Calu3 (cell line): ENCODE measurements at regions of chrX and their contacts with region 1.

Region 1: DNA sequence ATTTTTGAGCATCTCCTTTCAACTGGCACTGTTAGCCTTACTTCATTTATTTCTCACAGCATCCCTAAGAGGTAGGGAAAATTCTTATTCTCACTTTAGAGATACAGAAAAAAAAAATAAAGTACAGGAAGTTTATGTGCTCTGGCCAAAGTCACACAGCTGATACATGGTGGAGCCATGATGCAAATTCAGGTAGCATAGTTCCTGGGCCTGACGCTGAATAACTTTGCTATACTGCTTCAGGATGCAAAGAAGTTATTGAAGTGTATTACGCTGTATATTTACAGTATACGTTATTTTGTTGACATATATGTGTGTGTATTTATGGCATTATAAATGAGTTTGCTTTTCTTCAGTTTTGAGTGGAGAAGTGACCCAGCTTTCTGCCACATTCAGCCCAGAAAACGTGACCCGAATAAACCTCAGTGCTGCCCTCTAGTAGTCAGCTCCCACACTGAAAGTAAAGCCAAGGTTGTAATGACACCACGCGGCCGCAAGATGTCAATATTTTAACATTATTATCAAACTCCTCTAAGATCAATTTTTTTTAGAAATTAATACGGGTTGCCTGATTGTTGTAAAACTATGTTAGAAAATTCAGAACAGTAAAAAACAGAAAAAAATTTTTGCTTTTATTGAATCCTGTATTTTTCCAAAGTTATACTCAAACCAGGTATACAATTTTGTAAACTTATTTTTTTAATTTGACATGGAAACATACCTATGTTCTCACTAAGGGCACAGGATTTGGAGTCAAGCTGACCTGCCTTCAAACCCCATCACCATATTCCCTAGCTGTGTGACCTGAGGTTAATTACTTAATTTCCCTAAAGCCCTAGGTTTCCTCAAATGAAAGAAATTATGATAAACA is 3.8 kb upstream of the GUCY2F start:
- DNase-seq: peak; percentile 50
- H3K4me3 Mint-ChIP-seq: no peak overlapping the region
- H3K27ac Mint-ChIP-seq: no peak overlapping the region
- H3K4me1 Mint-ChIP-seq: no peaks in the 10 kb centered on the region
- H3K27me3 Mint-ChIP-seq: peaks cover 26% of the 10 kb centered on the region
- CTCF ChIP-seq: peak; percentile 81

Region 2: DNA sequence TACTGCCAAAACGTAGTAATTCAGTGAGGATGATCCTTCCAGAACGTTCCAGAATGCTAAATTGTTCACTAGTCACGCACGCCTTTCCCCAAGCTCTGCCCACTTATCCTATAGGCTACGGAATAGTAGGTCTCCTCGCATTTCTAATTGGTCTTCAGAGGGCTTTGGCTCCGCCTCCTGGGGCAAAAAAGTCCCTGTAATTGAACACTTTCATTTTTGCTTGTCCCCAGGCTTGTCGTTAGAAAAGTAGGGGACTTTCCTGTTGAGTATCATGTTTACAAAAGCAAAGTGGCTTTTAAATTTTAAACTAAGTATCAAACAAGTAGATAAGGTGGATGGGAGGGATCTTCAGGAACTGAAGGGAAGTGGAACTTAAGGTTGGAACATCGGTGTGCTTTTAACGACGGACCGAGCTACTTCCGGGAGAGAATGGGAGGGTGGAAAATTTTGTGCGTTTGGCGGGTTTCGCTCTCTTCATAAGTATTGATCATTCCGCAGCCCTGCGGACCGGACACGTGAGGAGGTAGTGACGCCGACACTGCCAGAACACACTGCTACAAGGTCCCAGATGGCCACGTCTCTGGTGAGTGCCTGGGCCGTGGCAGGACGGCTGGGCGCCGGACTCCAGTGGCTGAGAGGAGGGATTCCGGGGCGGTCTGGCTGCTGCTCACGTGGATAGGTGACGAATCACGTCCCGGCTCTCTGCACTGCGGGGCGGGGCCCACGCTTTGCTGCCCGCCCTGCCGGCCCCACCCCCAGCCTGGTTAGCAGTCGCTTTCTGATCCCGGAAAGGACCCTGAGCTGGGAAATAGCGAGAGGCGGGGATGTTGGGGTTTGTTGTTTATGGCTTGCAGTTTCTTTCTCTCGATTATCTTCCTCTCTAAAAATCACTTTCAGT is 51.0 kb after region 1 on chrX and contains the start of gene NXT2:
- CTCF ChIA-PET with region 1: interaction called, 4 read pairs
- intact Hi-C with region 1: loop called (anchors 2 kb)
- DNase-seq: peak; percentile 92
- H3K4me3 Mint-ChIP-seq: peak within 1 kb of the TSS; percentile 80
- H3K27ac Mint-ChIP-seq: peak within 1 kb of the TSS; percentile 98
- H3K4me1 Mint-ChIP-seq: peaks cover 17% of the 10 kb centered on the region
- H3K27me3 Mint-ChIP-seq: no peaks in the 10 kb centered on the region
- CTCF ChIP-seq: no peak
- total RNA-seq, gene NXT2: 13.1 and 14.6 TPM in 2 replicates

Region 3: GRCh38 chrX:109635176-109635575 is 149.5 kb after region 1 on chrX:
- CTCF ChIA-PET with region 1: interaction called, 9 read pairs
- intact Hi-C with region 1: loop called (anchors 1 kb)
- DNase-seq: peak; percentile 5
- H3K4me3 Mint-ChIP-seq: no peak overlapping the region
- H3K27ac Mint-ChIP-seq: no peak overlapping the region
- H3K4me1 Mint-ChIP-seq: no peaks in the 10 kb centered on the region
- H3K27me3 Mint-ChIP-seq: no peaks in the 10 kb centered on the region
- CTCF ChIP-seq: peak; percentile 52

Region 4: DNA sequence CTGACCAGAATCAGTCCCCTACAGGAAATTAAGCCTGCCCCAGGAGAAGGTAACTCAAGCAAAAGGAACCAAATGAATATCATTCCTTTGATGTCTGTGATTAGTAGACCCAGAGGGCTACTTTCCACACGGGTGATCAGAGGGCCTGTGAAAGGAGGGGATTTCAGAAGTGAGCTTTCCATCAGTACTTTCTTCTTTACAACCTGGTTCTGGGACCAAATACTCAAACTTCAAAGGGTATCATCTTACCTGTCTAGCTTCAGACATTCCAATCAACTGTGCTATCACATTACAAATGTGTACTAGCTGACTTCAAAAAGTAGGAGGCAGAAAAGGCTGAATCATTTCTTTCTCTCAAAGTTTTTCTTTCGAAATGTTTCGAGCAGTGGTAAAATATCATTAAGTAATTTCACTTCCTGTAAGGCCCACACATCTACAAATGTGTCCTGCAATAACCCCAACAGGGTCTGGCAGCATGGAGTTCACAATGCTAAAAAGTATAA is 223.5 kb after region 1 on chrX:
- CTCF ChIA-PET with region 1: no interaction called
- intact Hi-C with region 1: loop called (anchors 5 kb)
- DNase-seq: no peak
- H3K4me3 Mint-ChIP-seq: no peak overlapping the region
- H3K27ac Mint-ChIP-seq: no peak overlapping the region
- H3K4me1 Mint-ChIP-seq: peaks cover 8% of the 10 kb centered on the region
- H3K27me3 Mint-ChIP-seq: no peaks in the 10 kb centered on the region
- CTCF ChIP-seq: no peak

Region 5: DNA sequence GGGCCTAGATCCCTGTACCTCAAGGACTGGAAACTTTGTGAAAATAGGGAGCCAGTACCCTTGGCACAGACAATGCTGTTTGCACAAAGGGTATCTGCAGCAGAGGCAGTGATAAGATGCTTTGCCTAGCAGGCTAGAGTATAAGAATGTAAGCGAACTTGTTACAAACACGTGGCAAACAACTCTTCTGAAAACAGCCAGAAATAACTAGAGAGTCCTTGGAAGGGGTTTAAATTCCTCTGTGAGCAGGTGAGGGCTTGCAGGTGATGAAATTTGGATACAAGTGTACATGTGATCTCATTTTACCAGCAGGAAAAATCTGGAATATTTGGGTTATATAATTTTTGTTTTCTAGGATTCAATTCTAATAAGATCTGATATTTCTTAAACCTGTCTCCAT is 266.0 kb after region 1 on chrX:
- CTCF ChIA-PET with region 1: no interaction called
- intact Hi-C with region 1: no loop called
- DNase-seq: no peak
- H3K4me3 Mint-ChIP-seq: no peak overlapping the region
- H3K27ac Mint-ChIP-seq: no peak overlapping the region
- H3K4me1 Mint-ChIP-seq: no peaks in the 10 kb centered on the region
- H3K27me3 Mint-ChIP-seq: no peaks in the 10 kb centered on the region
- CTCF ChIP-seq: no peak